GM13977 (cell line): ENCODE measurements at regions of chr15 and their contacts with region 1.

Region 1: GRCh38 chr15:90895336-90896117 is 7.6 kb upstream of the MAN2A2 start:
- DNase-seq: no peak
- CTCF ChIP-seq: no peak

Region 2: DNA sequence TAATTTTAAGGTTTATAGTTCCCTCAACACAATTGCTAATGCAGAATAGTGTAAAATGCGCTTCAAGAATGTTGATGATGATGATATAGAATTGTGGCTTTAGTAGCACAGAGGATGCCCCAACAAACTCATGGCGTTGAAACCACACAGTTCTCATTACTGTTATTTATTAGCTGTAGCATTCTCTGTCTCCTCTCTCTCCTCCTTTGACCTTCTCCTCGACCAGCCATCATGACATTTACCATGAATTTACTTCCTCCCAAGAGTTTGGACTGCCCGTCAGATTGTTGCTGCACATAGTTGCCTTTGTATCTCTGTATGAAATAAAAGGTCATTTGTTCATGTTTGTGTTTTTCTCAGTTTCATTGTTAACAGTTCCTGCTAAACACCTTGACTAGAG is 393.6 kb before region 1 on chr15:
- in situ Hi-C with region 1: loop called (anchors 10 kb)
- DNase-seq: no peak
- CTCF ChIP-seq: no peak